ENCODE measurements at regions of chr7 and their contacts with region 1.

Region 1: DNA sequence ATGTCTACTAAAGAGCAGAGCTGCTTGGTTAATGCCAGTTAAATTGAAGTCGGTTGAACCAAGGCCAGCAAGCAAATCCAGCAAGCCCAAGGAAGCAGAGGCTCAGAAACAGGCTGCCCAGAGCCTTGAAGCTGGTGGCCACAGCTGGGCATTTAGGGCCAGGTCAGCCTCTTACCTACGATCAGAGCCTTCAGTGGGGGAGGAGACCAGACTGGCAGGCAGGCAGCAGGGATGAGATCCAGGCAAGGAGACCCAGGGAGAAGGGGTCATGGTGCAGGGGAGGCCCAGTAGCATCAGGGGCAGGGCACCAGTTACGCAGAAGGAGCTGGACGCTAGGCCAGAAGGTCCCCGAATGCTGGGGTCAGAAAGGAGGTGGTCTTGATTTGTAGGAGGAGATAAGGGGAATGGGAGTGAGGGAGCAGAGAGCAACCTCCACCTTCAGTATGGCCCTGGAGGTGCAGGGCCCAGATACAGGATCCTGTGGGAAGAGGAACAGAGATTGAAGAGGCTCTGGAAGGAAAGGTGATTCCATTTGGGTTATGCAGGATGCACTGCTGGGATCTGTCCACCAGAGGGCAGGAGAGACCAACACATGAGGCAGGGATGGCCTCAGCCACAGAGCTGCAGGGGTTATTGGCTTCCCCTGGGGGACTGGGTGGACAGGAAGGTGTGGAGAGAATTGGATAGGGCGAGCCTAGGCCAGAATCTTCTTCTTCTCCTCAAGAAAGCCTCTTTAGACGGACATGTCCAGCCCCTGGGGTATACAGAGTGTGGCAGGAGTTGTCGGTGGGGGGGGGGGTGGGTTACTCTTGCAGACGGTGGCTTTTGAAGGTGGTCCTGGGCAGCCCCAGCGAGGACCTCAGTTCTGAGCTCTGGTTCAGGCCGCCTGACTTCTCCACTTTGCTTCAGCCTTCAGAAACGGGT is 132.6 kb upstream of the PODXL start:
- DNase-seq: peak; percentile 23
- ATAC-seq: peak; percentile 79
- H3K4me3 ChIP-seq: no peak overlapping the region
- H3K27ac ChIP-seq: no peak overlapping the region
- H3K4me1 ChIP-seq: peaks cover 0 to 8% of the 10 kb centered on the region in 2 experiments; a peak in 3 of 4 replicates
- H3K27me3 ChIP-seq: peaks cover 34% of the 10 kb centered on the region
- CTCF ChIP-seq: peak; percentile 78 to 98 (median 93); a peak in 5 of 6 replicates
- POLR2A ChIP-seq: no peak
- RAD21 ChIP-seq: peak; percentile 94

Region 2: GRCh38 chr7:131859147-131859821 is 170.3 kb after region 1 on chr7:
- CTCF ChIA-PET with region 1: interaction called, 21 read pairs
- POLR2A ChIA-PET with region 1: no interaction called
- RAD21 ChIA-PET with region 1: interaction called in 1 of 2 experiments, 4 read pairs
- intact Hi-C with region 1: loop called (anchors 5 kb)
- DNase-seq: peak; percentile 43
- ATAC-seq: peak; percentile 99
- H3K4me3 ChIP-seq: no peak overlapping the region
- H3K27ac ChIP-seq: no peak overlapping the region
- H3K4me1 ChIP-seq: peaks cover 0 to 6% of the 10 kb centered on the region in 2 experiments; a peak in 1 of 4 replicates
- H3K27me3 ChIP-seq: peaks cover 24% of the 10 kb centered on the region
- CTCF ChIP-seq: peak; percentile 65 to 93 (median 83); a peak in 5 of 6 replicates
- POLR2A ChIP-seq: no peak
- RAD21 ChIP-seq: peak; percentile 81

Region 3: DNA sequence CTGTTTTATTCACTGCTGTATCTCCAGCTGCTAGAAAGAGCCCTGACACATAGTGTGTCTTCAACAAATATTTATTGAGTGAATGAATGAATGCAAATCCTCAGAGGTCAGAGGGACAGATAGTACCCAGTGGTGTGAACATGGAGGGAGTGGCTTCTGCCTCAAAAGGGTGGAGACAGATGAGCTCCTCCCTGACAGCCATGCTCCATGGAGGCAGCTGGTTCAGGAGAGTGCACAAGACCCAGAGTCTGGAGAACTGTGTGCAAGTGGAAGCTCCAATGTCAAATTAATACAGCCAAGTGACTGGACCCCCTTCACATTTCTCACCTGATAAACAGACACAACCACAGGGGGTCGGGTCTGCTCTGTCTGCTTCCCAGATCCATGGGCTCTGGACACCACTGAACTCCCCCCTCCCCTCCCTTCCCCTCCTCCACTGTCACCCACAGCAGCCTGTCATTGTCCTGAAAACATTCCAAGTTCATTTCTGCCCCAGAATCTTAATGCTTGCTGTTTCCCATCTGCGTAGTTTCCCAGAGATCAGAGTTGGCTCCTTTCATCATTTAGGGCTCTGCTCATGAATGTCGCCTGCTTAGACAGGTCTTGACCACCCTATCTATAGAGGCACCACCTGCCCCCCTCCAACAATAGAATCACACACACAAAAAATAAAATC is 180.3 kb after region 1 on chr7:
- CTCF ChIA-PET with region 1: no interaction called
- POLR2A ChIA-PET with region 1: no interaction called
- RAD21 ChIA-PET with region 1: no interaction called
- intact Hi-C with region 1: no loop called
- DNase-seq: no peak
- ATAC-seq: no peak
- H3K4me3 ChIP-seq: no peak overlapping the region
- H3K27ac ChIP-seq: no peak overlapping the region
- H3K4me1 ChIP-seq: no peaks in the 10 kb centered on the region
- H3K27me3 ChIP-seq: peaks cover 31% of the 10 kb centered on the region; the same call in 1 of the 2 replicates
- CTCF ChIP-seq: no peak
- POLR2A ChIP-seq: no peak
- RAD21 ChIP-seq: no peak

Region 4: DNA sequence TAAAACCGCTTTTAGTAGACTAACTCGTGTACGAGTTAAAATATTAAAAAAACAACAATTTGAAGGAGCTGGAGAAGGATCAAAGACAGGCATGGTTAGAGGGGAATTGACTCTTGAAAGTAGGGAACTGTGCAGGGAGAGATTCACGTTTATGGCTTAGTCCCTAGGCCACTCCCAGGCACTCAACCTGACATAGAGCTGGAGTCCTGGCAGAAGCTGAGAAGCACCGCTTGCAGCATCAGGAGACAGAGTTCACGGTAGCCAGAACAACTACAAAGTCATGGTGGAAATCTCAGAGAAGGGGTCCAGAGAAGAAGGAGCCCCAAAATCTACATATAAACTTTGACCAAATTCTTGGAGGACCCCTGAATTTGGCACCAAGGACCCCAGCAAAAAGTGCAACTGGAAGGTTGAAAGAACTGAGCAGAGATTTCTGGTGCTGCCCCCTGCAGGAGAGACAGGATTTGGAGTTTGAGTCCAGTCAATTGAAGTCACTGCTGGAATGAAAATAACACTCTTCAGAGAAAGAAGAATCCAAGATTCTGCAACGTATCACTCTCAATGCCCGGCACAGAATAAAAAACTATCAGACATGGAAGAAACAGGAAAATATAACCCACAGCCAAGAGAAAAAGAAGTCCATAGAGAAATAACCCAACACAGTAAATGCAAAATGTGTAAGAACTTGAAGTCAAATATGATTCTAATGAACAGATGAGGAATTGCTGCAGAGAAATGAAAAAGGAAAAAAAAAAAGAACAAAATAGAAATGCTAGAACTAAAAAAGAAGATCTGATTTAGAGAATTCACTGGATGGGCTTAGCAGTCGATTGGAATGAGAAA is 360.7 kb after region 1 on chr7:
- CTCF ChIA-PET with region 1: no interaction called
- POLR2A ChIA-PET with region 1: no interaction called
- RAD21 ChIA-PET with region 1: no interaction called
- intact Hi-C with region 1: loop called (anchors 5 kb)
- DNase-seq: peak; percentile 16
- ATAC-seq: peak; percentile 73
- H3K4me3 ChIP-seq: no peak overlapping the region
- H3K27ac ChIP-seq: no peak overlapping the region
- H3K4me1 ChIP-seq: no peaks in the 10 kb centered on the region
- H3K27me3 ChIP-seq: peaks cover 40% of the 10 kb centered on the region
- CTCF ChIP-seq: peak; percentile 50 to 78 (median 77); a peak in 5 of 6 replicates
- POLR2A ChIP-seq: no peak
- RAD21 ChIP-seq: peak; percentile 53; the same call in 1 of the 2 replicates

Region 5: GRCh38 chr7:132154248-132154647 is 465.2 kb after region 1 on chr7:
- CTCF ChIA-PET with region 1: no interaction called
- POLR2A ChIA-PET with region 1: no interaction called
- RAD21 ChIA-PET with region 1: no interaction called
- intact Hi-C with region 1: loop called (anchors 2 kb)
- DNase-seq: no peak
- ATAC-seq: no peak
- H3K4me3 ChIP-seq: no peak overlapping the region
- H3K27ac ChIP-seq: no peak overlapping the region
- H3K4me1 ChIP-seq: no peaks in the 10 kb centered on the region
- H3K27me3 ChIP-seq: peaks cover 65% of the 10 kb centered on the region
- CTCF ChIP-seq: peak in 2 of 3 experiments; percentile 26 to 31; a peak in 3 of 6 replicates
- POLR2A ChIP-seq: no peak
- RAD21 ChIP-seq: peak; percentile 49

Region 6: GRCh38 chr7:132206594-132206993 is 517.6 kb after region 1 on chr7:
- CTCF ChIA-PET with region 1: no interaction called
- POLR2A ChIA-PET with region 1: no interaction called
- RAD21 ChIA-PET with region 1: no interaction called
- intact Hi-C with region 1: no loop called
- DNase-seq: no peak
- ATAC-seq: no peak
- H3K4me3 ChIP-seq: no peak overlapping the region
- H3K27ac ChIP-seq: no peak overlapping the region
- H3K4me1 ChIP-seq: no peaks in the 10 kb centered on the region
- H3K27me3 ChIP-seq: 0 out of 2 replicates have a peak, but pooled peaks cover 3% of the 10 kb centered on the region
- CTCF ChIP-seq: no peak
- POLR2A ChIP-seq: no peak
- RAD21 ChIP-seq: no peak

Region 7: GRCh38 chr7:132574281-132574680 is 885.3 kb after region 1 on chr7:
- CTCF ChIA-PET with region 1: no interaction called
- POLR2A ChIA-PET with region 1: no interaction called
- RAD21 ChIA-PET with region 1: no interaction called
- intact Hi-C with region 1: no loop called
- DNase-seq: no peak
- ATAC-seq: no peak
- H3K4me3 ChIP-seq: no peak overlapping the region
- H3K27ac ChIP-seq: no peak overlapping the region
- H3K4me1 ChIP-seq: no peaks in the 10 kb centered on the region
- H3K27me3 ChIP-seq: peaks cover 59% of the 10 kb centered on the region
- CTCF ChIP-seq: no peak
- POLR2A ChIP-seq: no peak
- RAD21 ChIP-seq: no peak